ENCODE measurements at regions of chr5 and their contacts with region 1.

Region 1: DNA sequence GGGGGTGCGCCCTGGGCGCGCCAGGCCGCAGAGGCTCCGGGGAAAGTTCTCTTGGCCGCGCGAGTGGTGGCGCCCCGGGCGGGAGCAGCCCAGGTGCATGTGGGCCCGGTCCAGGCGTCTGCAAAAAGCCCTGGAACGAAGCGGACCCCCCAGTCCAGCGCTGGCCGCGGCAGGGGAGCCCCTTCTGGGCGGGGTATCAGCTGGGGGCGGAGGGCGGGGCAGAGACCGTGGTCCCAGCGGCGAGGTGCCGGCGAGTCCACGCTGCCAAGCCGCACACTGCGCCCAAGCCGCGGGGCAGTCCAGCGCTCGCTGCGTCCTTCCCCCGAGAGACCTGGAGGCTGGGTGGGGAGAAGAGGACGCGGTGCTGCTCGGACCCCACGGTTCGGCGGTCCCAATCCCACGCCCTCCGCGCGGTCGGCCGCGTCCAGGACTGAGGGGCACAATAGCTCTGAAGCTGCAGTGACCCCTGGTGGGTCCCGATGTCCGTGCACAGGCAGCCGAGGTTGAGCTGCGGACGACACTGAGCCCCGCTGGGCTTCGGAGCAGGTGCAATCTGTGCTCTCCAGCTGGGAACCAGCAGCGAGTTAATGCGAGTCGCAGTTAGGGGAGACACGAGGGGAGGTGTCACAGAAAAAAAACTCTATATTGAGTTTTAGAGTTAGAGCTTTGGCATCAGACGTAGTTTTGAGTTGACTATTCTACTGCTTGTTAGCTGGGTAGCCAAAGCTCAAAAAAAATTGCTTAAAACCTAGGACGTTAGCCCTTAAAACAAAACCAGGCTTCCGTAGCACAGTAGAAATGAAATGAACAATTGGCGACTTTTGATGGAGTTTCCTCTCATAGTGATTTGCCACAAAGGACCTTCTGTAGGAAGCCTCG is 1.1 kb upstream of the EPB41L4A start:
- DNase-seq: peak; percentile 5
- ATAC-seq: peak; percentile 89
- H3K4me3 ChIP-seq: peak overlapping the region; percentile 40; the same call in 1 of the 2 replicates
- H3K27ac ChIP-seq: no peak overlapping the region
- H3K4me1 ChIP-seq: no peaks in the 10 kb centered on the region
- H3K27me3 ChIP-seq: peaks cover 33% of the 10 kb centered on the region
- CTCF ChIP-seq: peak; percentile 43
- POLR2A ChIP-seq: no peak
- RAD21 ChIP-seq: peak; percentile 48

Region 2: DNA sequence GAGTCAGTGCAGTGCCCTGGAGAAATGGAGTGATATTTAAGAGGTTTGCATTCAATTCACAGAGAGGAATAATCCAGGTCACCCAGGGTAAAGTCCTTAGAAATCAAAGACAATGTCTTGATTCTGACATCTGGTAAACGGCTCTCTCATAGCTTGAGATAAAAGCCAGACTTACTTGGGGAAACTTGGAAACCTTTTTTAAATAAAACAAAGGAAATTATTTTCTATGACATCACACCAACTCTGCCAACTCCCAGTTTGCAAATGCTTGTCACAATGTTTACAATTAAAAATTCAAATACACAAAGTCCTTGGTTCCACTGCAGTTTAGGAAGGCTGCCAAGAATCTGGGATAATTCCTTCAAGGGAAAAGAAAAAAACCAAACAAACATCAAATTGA is 408.1 kb before region 1 on chr5:
- CTCF ChIA-PET with region 1: no interaction called
- POLR2A ChIA-PET with region 1: no interaction called
- dilution Hi-C with region 1: no loop called
- in situ Hi-C with region 1: no loop called
- intact Hi-C with region 1: no loop called
- DNase-seq: peak; percentile 72
- ATAC-seq: peak; percentile 27; the same call in 1 of the 2 replicates
- H3K4me3 ChIP-seq: no peak overlapping the region
- H3K27ac ChIP-seq: no peak overlapping the region
- H3K4me1 ChIP-seq: peaks cover 7% of the 10 kb centered on the region
- H3K27me3 ChIP-seq: no peaks in the 10 kb centered on the region
- CTCF ChIP-seq: no peak
- POLR2A ChIP-seq: no peak
- RAD21 ChIP-seq: no peak

Region 3: DNA sequence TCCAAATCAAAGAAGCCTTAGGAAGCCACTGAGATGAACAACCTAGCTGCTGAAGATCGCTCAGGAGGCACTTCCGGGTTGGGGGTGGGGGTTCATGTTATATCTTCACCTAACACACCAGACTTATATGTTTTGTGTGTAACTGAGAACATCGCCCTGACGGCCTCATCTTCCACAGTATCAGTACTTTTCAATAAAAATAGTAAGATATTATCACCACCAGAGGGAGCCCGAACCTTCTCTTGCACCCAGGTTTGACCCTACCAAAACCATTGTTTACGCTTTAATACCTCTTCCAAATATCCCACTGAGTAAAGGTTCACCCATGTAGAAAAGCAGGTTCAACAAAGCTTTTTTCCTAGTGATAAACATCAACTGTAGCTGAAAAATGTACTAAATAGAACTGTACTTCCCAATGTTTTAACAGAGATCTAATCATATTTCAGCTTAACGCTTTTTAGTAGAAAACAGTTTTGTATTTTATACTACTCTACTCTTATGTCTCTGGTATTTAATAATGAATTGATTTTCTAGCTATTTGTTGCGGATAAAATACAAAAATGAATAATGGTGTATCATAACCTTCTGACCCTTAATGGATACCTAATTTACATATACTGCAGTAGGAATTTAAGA is 245.1 kb before region 1 on chr5:
- CTCF ChIA-PET with region 1: no interaction called
- POLR2A ChIA-PET with region 1: no interaction called
- dilution Hi-C with region 1: no loop called
- in situ Hi-C with region 1: no loop called
- intact Hi-C with region 1: loop called (anchors 1 kb)
- DNase-seq: peak; percentile 26
- ATAC-seq: peak; percentile 80
- H3K4me3 ChIP-seq: 0 out of 2 replicates have a peak overlapping the region, but pooled peaks have one; percentile 27
- H3K27ac ChIP-seq: no peak overlapping the region
- H3K4me1 ChIP-seq: no peaks in the 10 kb centered on the region
- H3K27me3 ChIP-seq: no peaks in the 10 kb centered on the region
- CTCF ChIP-seq: peak; percentile 56
- POLR2A ChIP-seq: no peak
- RAD21 ChIP-seq: peak; percentile 48